Right ventricle myocardium inferior (tissue), 1 donor: ENCODE measurements at regions of chr2 and their contacts with region 1.

Region 1: DNA sequence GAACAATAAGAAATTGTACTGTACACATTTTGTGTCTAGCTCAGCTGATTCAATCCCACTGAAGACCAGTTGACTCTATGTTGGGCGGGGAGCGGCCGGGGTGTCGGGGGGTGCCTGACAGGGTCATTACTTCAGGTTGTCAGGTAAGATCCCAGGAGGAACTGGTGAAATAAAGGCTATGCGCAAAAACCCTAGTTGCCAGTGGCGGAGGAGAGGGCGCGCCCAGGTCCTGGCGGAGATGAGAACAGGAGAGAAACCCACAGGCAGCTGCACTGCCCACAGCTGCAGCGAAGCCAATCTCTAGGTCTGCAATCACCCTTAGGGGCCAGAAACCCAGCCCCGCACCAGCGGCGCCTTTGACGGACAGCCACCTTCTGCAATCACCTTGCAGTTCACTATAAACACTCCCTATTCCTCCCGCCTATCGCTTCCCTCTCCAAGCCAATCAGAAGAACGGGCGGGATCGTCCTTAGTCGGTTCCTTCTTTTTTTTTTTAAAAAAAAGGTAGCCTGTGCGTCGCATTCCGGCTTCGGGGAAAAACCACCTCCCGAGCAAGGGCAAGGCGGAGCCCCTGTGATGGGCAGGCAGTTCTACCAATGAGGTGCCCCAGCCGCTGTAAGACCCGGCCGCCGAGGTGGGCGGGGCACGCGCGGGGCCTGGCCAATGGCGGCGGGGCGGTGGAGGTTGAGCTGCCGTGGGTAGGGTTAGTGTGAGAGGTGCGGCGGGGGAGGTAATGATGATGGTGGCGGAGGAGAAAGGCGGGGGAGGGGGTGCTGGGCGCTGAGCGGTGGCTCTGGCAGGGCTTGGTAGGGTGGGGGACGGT is at the start of gene EHBP1:
- DNase-seq: peak; percentile 99
- ATAC-seq: peak; percentile 99
- total RNA-seq, gene EHBP1: 25.7 TPM

Region 2: DNA sequence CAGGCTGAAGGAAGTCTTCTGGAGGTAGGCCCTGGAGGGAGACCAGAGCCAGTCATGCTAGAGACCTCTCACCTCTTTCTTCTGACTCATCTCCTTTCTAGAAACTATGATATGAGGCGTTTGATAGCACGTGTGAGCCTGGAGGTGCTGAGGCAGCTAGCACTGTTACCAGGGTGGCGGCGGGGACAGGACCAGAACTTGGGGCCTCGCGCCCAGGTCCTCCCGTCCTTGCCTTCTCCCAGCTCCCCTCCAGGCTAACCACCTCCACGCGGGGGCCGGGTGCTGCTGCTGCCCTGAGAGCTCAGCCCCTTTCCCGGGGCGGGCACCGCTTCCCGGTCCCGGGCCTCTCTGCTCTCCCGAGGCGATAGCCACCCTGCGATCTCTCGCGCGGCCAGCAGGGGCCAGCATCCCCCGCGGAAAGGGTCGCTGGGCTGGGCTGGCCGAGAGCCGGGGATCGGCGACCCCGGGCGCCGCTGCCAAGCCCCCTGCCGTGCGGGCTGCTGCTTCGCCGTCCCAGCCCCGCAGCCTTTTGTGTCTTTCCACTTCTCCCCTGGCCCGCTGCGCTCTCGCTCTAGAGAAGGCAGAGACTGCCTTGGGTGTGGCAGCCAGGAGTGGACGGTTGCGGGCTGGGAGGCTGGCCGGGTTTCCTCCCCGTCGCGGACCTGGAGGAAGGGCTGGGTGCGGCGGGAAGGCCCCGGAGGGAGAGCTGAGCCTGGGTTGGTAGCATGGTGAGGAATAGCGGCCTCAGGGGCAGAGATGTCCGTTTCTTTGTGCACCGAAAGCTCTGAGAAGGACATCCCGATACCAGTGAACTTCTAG is 248.3 kb before region 1 on chr2:
- intact Hi-C with region 1: loop called (anchors 5 kb)
- DNase-seq: peak; percentile 84
- ATAC-seq: peak; percentile 82

Region 3: GRCh38 chr2:62505750-62506420 is 199.3 kb before region 1 on chr2 and contains the start of gene TMEM17:
- intact Hi-C with region 1: loop called (anchors 1 kb)
- DNase-seq: peak; percentile 92
- ATAC-seq: peak; percentile 97
- total RNA-seq, gene TMEM17: 1.3 TPM

Region 4: DNA sequence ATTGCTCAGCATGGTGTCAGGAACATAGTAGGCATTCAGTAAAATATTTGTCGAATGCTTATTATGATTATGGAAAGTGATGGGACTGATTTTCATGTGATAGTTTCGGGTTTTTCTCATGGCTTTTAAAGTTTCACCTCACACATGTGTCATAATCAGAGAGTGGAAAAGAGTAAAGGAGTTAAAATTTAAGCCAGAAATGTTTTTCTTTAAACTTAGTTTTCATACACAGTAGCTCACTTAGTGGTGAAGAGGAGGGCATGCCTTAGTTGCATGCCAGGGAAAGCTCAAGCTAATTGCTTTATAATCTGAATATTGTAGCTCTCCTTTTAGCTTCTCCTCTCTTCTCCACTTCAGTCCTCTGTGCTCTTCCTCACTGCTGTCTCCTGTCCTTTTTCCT is 38.3 kb after region 1 on chr2:
- intact Hi-C with region 1: no loop called
- DNase-seq: no peak
- ATAC-seq: no peak

Region 5: GRCh38 chr2:62774555-62775366 is 69.5 kb after region 1 on chr2:
- intact Hi-C with region 1: loop called (anchors 10 kb)
- DNase-seq: no peak
- ATAC-seq: no peak